Cardiac septum (tissue), 1 donor: ENCODE measurements at regions of chr3 and their contacts with region 1.

Region 1: DNA sequence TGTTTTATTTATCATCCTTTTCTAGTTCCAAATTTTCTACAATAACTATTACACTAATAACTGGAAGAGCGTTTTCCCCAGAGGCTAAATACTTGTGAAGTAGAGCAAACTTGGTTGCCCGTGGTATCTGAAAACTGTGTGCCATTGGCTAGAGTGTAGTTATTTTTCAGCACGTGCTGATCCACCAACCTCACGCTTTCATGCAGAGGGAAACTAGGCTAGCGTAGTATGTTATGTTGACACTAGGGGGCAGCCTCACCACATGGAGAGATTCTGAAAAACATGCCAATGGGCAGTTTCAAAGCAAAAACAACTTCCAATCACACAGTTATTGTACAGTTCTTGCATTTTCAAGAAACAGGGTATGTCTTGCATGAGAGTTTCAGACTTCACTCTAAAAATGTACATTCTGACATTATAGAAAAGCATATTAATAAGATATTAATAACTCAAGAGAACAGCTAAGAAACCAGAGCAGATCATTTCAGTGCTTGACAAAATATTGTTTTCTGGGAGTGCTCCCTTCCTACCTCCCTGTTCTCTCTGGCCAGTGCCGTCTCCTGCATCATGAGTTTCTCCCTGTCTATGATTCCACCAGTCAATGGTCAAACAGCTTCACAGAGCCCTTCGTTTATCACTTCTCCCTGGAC is 39.7 kb downstream of the SPATA12 start:
- DNase-seq: no peak

Region 2: DNA sequence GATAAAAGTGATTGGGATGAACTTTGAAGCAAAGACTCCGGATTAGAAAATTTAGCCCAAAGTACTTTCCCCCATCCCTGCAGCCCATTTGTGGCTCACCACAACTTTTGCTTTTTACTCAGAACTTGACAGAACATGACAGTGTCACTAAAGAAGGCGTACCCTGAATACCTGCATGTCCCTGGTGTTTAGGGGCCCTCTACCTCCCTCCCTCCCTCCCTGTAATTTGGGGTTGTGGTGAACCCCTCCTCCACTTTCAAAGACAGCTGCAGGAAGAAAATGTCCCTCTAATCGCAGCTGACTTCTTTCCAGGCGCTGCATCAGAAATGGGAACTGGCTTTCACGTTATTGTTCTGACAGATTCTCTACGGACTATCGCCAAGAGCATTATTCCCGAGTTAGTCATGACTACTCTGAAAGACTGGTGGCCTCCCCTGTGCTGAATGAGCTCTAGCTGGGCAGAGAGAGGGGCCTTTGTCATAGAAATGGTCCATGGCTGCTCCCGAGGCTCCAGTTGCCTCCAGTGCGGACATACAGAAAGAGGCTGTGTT is 205.2 kb before region 1 on chr3:
- intact Hi-C with region 1: no loop called
- DNase-seq: no peak

Region 3: DNA sequence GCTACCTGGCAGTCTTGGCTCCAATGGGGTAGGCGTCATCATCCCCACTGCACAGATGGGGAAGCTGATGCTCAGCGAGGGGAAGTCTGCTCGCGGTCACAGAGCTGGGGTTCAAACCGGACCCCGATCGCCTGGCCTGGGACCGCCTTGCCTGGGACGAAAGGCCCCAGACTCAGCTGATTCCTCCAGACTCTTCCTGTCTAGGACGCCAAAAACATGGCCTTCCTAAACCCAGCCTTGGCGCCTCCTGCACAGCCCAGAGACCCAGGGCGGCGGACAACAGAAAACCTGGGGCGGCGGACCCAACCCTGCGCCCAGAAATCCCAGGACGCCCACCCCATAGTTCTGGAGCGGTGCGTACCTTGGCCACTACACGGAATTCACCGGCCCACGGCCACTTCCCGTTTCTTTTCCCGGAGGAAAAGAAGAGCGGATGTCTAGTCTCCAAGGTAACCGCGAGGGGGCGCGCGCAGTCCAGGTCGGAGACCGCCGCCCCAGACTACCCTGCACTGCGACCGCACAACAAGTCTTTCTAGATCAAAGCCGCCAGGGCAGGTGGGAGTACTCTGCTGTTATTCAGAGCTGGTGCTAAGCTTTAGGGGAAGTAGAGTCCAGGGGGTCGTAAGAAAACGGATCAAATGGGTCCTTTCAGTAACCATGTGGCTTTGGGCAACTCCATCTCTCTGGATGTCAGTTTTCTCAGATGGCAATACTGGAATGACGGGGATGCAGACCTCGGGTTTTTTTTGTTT is 69.9 kb after region 1 on chr3:
- intact Hi-C with region 1: loop called (anchors 2 kb)
- DNase-seq: peak; percentile 89